Posterior cingulate gyrus (tissue), 11 donors: ENCODE measurements at regions of chr11 and their contacts with region 1.

Region 1: DNA sequence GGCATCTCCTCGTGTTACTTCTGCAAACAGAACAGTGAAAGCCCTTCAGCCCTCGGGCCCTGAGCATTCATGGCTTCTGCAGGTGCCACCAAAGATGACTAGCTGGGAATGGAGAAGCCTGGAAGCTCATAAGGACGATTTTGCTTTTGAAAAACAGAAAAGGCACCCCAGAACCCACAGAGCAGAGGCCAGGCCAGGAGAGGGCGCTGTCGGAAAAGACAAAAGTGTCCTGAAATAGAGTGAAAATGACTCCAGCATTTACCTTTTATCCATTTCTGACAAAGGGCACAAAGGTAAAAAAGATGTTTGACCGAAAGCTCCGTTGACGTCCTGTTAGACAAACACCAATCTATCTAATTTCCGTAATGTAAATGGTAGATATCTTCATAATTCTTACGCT is 37.6 kb downstream of the ZNF195 start:
- DNase-seq: peak in 7 of 10 donors; percentile 15 to 78 (median 58)

Region 2: GRCh38 chr11:2912498-2912897 is 428.8 kb before region 1 on chr11:
- intact Hi-C with region 1: no loop called
- DNase-seq: no peak

Region 3: GRCh38 chr11:3412837-3413236 is 71.5 kb after region 1 on chr11:
- intact Hi-C with region 1: loop called (anchors 10 kb)
- DNase-seq: no peak

Region 4: DNA sequence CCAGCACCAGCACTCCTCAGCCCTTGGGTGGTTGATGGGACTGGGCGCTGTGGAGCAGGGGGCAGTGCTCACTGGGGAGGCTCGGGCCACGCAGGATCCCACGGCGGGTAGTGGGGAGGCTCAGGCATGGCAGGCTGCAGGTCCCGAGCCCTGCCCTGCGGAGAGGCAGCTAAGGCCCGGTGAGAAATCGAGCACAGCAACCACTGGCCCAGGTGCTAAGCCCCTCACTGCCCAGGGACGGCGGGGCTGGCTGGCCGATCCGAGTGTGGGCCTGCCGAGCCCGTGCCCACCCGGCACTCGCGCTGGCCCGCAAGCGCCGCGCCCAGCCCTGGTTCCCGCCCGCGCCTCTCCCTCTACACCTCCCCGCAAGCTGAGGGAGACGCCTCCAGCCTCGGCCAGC is 93.7 kb after region 1 on chr11:
- intact Hi-C with region 1: no loop called
- DNase-seq: no peak

Region 5: DNA sequence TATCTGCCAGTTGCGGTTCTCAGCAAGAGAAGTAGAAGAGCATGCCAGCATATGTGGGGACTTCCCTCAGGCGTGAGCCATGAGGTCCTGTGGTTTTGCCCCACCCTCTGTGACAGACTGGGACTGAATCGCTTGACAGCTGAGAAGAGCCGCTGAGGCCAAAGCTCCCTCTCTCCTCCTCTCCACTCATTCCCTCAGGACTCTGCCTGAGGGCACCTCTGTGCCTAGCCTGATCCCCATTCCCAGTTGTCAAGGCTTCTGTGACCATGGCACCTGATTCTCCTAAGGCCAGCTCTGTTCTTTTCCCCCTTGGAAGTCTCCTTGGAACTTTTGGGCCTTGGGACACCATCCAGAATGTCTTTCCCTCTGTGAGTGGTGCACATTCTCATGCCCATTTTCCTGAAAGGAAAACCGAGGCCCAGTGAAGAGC is 273.5 kb after region 1 on chr11:
- intact Hi-C with region 1: no loop called
- DNase-seq: no peak